Activated CD4-positive, alpha-beta memory T cell treated with anti-CD3 and anti-CD28 coated beads, Interleukin-2, amount 10 ng/mL, durations not matched to agents 7 days and 5 days (primary cell): ENCODE measurements at regions of chr1 and their contacts with region 1.

Region 1: DNA sequence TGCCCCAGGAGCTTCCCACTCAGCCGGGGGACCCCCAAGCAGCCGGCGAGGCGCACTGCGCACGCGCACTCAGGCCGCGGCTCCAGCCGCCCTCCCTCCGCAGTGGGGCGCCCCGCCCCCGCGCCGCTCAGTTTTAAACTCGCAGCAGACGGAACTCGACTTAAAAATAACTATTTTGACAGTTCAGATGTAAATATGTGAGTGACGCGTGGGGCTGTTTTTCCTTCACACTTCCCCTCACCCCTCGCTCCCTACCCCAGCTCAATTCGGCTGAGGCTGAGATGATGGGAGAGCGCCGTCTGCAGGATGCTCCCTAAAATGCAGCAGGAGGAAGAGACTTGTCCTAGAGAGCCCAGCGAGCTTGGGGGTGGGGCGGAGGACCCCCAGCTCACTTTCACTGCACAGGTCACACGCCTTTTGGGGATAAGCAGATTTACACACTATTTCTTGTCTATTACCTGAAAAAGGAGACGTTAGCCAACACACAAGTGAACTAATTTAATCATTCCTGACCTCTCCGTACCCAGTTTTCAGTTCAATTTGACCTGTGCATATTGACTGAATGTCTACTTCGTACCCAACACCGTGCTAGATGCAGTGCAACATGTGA is 8.9 kb upstream of the LEMD1 start:
- DNase-seq: peak; percentile 63
- H3K4me3 Mint-ChIP-seq: peak overlapping the region; percentile 76
- H3K27ac Mint-ChIP-seq: no peak overlapping the region
- H3K4me1 Mint-ChIP-seq: peaks cover 10% of the 10 kb centered on the region
- H3K27me3 Mint-ChIP-seq: peaks cover 30% of the 10 kb centered on the region

Region 2: DNA sequence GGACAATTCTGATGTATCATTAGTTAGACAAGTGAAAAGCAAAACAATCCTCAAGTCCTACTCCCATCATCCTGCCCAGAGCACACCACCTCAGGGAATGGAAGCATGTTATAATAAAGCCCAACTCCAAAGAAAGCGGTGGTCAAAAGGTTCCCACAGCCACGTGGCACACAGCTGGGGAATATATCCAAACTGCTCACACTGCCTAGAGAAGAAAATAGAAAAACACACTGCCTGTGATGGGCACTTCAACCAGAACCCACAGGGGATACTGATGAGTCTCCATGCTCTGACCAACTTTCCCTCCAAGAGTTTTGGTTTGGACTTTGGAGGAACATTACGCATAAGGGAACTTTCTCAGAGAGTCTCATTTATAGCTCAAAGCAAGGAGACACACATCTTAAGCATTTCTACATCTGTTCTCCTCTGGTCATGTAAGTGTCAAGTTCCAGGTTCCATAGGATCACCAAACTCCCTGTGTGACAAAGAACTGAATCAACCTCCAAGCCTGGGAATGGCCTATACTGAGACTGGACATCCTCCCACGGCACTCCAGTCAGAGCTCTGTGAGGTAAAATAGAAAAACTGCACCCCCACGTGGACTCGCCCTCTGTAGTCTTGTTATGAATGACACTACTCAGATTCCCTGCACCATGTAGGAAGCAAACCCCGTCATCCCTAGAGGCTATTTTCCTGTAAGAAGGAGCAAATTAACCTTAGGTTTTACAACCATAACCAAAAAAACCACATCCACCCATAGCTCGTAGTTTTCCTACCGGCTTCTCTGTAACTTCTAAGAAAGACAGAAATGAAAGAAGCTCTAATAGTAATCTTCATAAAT is 231.5 kb before region 1 on chr1:
- CTCF ChIA-PET with region 1: no interaction called
- POLR2A ChIA-PET with region 1: no interaction called
- DNase-seq: peak; percentile 24
- H3K4me3 Mint-ChIP-seq: peak overlapping the region; percentile 6
- H3K27ac Mint-ChIP-seq: peak overlapping the region; percentile 9
- H3K4me1 Mint-ChIP-seq: peaks cover 38% of the 10 kb centered on the region
- H3K27me3 Mint-ChIP-seq: no peaks in the 10 kb centered on the region

Region 3: DNA sequence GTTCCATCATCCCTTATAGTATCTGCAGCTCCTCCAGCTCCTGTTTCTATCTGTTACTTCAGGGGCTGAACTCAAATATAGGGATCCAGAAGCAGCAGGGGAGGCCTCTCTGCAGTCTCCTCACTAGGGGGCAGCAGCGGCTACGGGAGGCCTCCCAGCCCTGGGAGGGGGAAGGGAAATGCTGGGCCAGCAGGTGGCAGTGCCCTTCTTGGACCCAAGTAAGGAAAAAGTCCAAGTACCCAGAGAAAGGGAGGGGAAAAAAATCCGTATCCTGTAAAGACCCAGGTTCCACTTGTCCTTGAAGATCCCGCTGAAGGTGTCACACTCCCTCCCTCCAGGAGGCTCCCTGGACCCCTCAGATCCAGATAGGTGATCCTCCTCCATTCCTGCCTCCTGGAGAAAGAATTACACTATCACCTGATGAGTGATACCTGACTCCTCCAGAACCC is 95.1 kb before region 1 on chr1:
- CTCF ChIA-PET with region 1: interaction called, 11 read pairs
- POLR2A ChIA-PET with region 1: no interaction called
- DNase-seq: peak; percentile 83
- H3K4me3 Mint-ChIP-seq: no peak overlapping the region
- H3K27ac Mint-ChIP-seq: no peak overlapping the region
- H3K4me1 Mint-ChIP-seq: peaks cover 6% of the 10 kb centered on the region
- H3K27me3 Mint-ChIP-seq: peaks cover 33% of the 10 kb centered on the region

Region 4: DNA sequence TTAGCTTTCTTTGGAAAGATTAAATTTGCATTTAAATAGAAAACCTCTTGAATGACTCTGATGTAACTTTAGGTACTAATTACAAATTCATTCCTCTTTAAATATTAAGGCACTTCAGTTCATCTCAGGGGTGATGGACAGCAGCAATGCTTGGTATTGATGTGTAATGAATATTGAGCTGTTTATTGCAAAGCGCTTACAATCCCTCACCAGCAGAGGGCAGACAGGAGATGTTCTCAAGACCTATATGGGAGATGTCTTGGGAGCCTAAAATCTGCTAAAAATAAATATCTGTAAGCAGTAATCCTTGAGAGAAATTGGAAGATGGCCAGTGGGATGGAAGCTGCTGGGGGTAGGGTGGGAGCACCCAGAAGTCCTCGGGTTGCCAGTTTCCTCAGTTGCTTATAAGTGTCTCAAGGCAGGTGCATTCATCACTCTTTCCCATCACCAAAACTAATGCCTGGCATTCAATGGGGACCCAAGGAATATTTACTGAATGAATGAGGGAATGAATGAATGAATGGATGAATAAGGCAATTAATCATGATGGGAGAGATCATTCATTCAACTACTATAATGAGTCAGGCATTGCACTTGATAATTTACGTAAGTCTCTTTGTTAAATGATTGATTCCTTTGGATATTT is 76.4 kb before region 1 on chr1:
- CTCF ChIA-PET with region 1: interaction called, 13 read pairs
- POLR2A ChIA-PET with region 1: no interaction called
- DNase-seq: peak; percentile 67
- H3K4me3 Mint-ChIP-seq: no peak overlapping the region
- H3K27ac Mint-ChIP-seq: no peak overlapping the region
- H3K4me1 Mint-ChIP-seq: no peaks in the 10 kb centered on the region
- H3K27me3 Mint-ChIP-seq: peaks cover 21% of the 10 kb centered on the region

Region 5: GRCh38 chr1:205396967-205397616 is 33.7 kb before region 1 on chr1:
- CTCF ChIA-PET with region 1: interaction called, 35 read pairs
- POLR2A ChIA-PET with region 1: no interaction called
- DNase-seq: no peak
- H3K4me3 Mint-ChIP-seq: no peak overlapping the region
- H3K27ac Mint-ChIP-seq: no peak overlapping the region
- H3K4me1 Mint-ChIP-seq: no peaks in the 10 kb centered on the region
- H3K27me3 Mint-ChIP-seq: peaks cover 30% of the 10 kb centered on the region